GM12878 (cell line): ENCODE measurements at regions of chr2 and their contacts with region 1.

Region 1: GRCh38 chr2:57906152-57906732 is 140.4 kb upstream of the VRK2 start:
- DNase-seq: no peak
- ATAC-seq: peak; percentile 78
- H3K4me3 ChIP-seq: no peak overlapping the region
- H3K27ac ChIP-seq: no peak overlapping the region
- H3K4me1 ChIP-seq: peaks cover 11% of the 10 kb centered on the region; the same call in 1 of the 2 replicates
- H3K27me3 ChIP-seq: no peaks in the 10 kb centered on the region
- CTCF ChIP-seq: peak; percentile 86 to 90 (median 89); a peak in 5 of 6 replicates
- EP300 ChIP-seq: no peak
- POLR2A ChIP-seq: no peak
- RAD21 ChIP-seq: peak; percentile 100

Region 2: DNA sequence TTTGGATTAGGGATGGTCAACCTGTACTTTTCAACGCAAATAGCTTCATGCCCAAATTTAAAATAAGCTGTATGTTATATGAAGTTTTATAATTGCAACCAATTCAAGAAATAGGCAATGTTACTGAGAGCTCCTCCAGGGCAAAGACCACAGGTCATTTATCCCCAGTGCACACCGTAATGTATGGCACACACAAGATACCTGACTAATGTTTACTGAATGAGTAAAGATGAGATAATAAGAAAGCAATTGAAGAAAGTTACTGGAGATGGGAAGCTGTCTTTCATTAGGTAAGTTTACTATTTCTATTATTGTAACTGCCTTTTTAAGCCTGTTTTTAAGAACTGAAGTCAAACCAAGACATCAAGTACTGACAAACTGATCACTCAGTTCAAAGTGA is 44.1 kb before region 1 on chr2:
- CTCF ChIA-PET with region 1: interaction called, 3 read pairs
- POLR2A ChIA-PET with region 1: no interaction called
- RAD21 ChIA-PET with region 1: interaction called, 3 read pairs
- SMC1A ChIA-PET with region 1: interaction called, 10 read pairs
- in situ Hi-C with region 1: no loop called
- intact Hi-C with region 1: no loop called
- DNase-seq: no peak
- ATAC-seq: no peak
- H3K4me3 ChIP-seq: no peak overlapping the region
- H3K27ac ChIP-seq: no peak overlapping the region
- H3K4me1 ChIP-seq: no peaks in the 10 kb centered on the region
- H3K27me3 ChIP-seq: no peaks in the 10 kb centered on the region
- CTCF ChIP-seq: no peak
- EP300 ChIP-seq: no peak
- POLR2A ChIP-seq: no peak
- RAD21 ChIP-seq: no peak

Region 3: DNA sequence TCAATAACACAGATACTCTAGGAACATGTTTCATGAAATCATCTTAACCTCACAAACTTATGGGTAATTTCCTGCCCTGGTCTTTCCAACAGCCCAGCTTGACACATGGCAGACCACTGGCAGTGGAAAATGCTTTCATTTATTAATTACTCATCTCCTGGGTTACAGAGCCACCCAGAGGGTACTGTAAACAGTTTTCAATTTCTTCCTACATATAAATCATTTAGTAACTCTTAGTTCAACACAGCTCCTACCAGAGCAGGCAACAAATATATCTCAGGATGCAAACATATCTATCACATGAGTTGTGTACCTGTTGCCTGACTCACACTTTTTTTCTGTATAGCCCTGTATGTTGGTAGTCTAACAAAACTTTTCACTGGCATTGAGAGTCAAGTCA is 41.2 kb after region 1 on chr2:
- CTCF ChIA-PET with region 1: interaction called, 19 read pairs
- POLR2A ChIA-PET with region 1: no interaction called
- RAD21 ChIA-PET with region 1: interaction called, 4 read pairs
- SMC1A ChIA-PET with region 1: interaction called, 5 read pairs
- in situ Hi-C with region 1: no loop called
- intact Hi-C with region 1: no loop called
- DNase-seq: no peak
- ATAC-seq: peak; percentile 45; the same call in 2 of the 3 replicates
- H3K4me3 ChIP-seq: no peak overlapping the region
- H3K27ac ChIP-seq: no peak overlapping the region
- H3K4me1 ChIP-seq: no peaks in the 10 kb centered on the region
- H3K27me3 ChIP-seq: no peaks in the 10 kb centered on the region
- CTCF ChIP-seq: no peak
- EP300 ChIP-seq: no peak
- POLR2A ChIP-seq: no peak
- RAD21 ChIP-seq: no peak

Region 4: GRCh38 chr2:58032016-58032763 is 125.9 kb after region 1 on chr2:
- CTCF ChIA-PET with region 1: interaction called, 4 read pairs
- POLR2A ChIA-PET with region 1: interaction called, 4 read pairs
- RAD21 ChIA-PET with region 1: interaction called, 4 read pairs
- SMC1A ChIA-PET with region 1: interaction called, 19 read pairs
- in situ Hi-C with region 1: no loop called
- intact Hi-C with region 1: no loop called
- DNase-seq: no peak
- ATAC-seq: peak; percentile 83
- H3K4me3 ChIP-seq: 0 out of 2 replicates have a peak overlapping the region, but pooled peaks have one; percentile 1
- H3K27ac ChIP-seq: peak overlapping the region; percentile 39
- H3K4me1 ChIP-seq: peaks cover 40% of the 10 kb centered on the region
- H3K27me3 ChIP-seq: no peaks in the 10 kb centered on the region
- CTCF ChIP-seq: no peak
- EP300 ChIP-seq: no peak
- POLR2A ChIP-seq: no peak
- RAD21 ChIP-seq: no peak

Region 5: DNA sequence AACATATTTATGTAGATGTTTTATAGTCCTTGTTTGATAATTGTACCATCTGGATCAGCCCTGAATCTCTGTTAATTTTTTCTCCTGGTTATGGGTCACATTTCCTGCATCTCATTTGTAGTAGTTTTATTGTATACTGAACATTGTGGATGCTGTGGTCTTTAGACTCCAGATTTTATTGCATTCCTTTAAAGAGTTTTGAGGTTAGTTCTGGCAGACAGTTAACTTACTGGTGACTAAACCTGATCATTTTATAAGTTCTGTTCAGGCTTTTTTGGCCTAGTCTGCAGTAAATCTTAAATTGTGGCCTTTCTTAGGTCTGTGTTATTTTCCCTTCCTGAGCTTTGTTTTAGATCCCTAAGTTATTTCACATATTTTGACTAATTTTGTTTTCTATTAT is 250.5 kb after region 1 on chr2:
- CTCF ChIA-PET with region 1: interaction called, 5 read pairs
- POLR2A ChIA-PET with region 1: no interaction called
- RAD21 ChIA-PET with region 1: interaction called, 6 read pairs
- SMC1A ChIA-PET with region 1: interaction called, 6 read pairs
- in situ Hi-C with region 1: no loop called
- intact Hi-C with region 1: loop called (anchors 5 kb)
- DNase-seq: no peak
- ATAC-seq: no peak
- H3K4me3 ChIP-seq: no peak overlapping the region
- H3K27ac ChIP-seq: no peak overlapping the region
- H3K4me1 ChIP-seq: no peaks in the 10 kb centered on the region
- H3K27me3 ChIP-seq: no peaks in the 10 kb centered on the region
- CTCF ChIP-seq: no peak
- EP300 ChIP-seq: no peak
- POLR2A ChIP-seq: no peak
- RAD21 ChIP-seq: no peak

Region 6: DNA sequence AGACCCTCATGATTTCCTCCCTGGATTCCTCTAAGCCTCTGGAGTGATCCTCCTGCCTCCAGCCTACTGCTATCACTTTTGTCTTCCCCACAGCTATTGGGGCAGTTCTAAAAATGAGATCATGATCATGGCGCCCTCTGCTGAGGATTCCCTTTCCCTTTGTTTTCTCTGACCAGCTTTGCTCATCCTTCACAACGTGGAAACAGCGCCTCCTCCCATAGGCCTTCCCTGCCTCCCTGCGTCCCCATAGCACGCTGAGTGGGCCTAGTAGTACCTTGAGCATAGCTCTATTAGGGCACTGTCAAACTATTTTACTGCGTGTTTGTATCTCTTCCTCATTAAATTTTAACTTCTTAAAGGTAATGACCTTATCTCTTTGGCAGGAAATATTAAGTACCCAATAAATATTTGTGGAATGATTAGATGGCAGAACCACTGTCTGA is 541.8 kb after region 1 on chr2:
- CTCF ChIA-PET with region 1: interaction called, 23 read pairs
- POLR2A ChIA-PET with region 1: interaction called, 5 read pairs
- RAD21 ChIA-PET with region 1: interaction called, 29 read pairs
- SMC1A ChIA-PET with region 1: interaction called, 58 read pairs
- in situ Hi-C with region 1: loop called (anchors 5 kb)
- intact Hi-C with region 1: loop called (anchors 1 kb)
- DNase-seq: peak; percentile 46
- ATAC-seq: peak; percentile 67
- H3K4me3 ChIP-seq: no peak overlapping the region
- H3K27ac ChIP-seq: no peak overlapping the region
- H3K4me1 ChIP-seq: no peaks in the 10 kb centered on the region
- H3K27me3 ChIP-seq: no peaks in the 10 kb centered on the region
- CTCF ChIP-seq: peak; percentile 50 to 77 (median 57); a peak in 5 of 6 replicates
- EP300 ChIP-seq: no peak
- POLR2A ChIP-seq: no peak
- RAD21 ChIP-seq: peak; percentile 68

Region 7: GRCh38 chr2:58871469-58872142 is 965.4 kb after region 1 on chr2:
- CTCF ChIA-PET with region 1: interaction called, 4 read pairs
- POLR2A ChIA-PET with region 1: no interaction called
- RAD21 ChIA-PET with region 1: no interaction called
- SMC1A ChIA-PET with region 1: interaction called, 5 read pairs
- in situ Hi-C with region 1: no loop called
- intact Hi-C with region 1: loop called (anchors 5 kb)
- DNase-seq: no peak
- ATAC-seq: peak; percentile 73
- H3K4me3 ChIP-seq: no peak overlapping the region
- H3K27ac ChIP-seq: no peak overlapping the region
- H3K4me1 ChIP-seq: no peaks in the 10 kb centered on the region
- H3K27me3 ChIP-seq: no peaks in the 10 kb centered on the region
- CTCF ChIP-seq: peak; percentile 10 to 29 (median 21); a peak in 3 of 6 replicates
- EP300 ChIP-seq: no peak
- POLR2A ChIP-seq: no peak
- RAD21 ChIP-seq: peak; percentile 48